CD4-positive, alpha-beta memory T cell (primary cell): ENCODE measurements at regions of chr9 and their contacts with region 1.

Region 1: DNA sequence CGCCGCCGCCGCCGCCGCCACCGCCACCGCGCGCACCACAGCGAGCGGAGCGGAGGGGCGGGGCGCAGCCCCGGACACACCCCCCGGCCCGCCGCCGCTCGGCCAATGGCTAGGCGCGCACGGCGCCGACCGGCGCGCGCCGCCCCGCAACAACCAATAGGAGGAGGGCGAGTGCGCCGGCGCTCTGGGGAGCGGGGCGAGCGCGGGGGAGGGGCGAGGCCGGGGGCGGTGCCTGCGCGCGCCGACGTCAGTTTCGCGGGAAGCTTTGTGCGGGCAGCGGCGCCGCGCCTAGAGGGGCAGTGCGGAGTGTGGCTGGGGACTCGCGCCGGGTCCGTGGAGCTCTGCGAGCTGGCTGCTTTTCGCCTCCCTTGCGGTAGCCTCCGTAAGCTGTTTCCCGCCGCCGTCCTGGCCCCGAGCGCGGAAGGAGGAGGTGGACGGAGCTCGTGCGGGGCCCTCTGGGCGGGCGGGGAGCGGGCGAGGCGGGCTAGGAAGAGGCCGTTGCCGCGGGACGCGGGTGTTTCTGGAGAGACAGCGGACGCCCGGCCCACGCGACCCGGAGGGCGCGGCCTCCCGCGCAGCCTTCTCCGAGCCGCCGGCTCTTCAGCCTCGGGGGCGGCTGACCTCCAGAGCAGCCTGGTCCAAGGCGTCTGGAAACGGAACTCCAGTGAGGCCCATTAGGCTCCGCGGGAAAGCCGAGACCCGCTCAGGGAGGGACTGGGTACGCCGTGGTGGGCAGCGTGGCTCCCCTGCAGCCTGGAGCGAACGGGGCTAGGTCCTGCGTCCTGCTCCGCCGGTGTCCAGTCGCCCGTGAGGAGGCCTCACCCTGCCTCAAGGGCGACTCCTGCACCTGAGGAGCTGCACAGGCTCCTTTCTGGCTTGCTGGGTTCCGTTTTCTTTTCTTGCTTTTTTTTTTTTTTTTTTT is at the start of gene ZMYND19:
- DNase-seq: peak; percentile 85 to 93 (median 91)
- H3K4me3 ChIP-seq: peak within 1 kb of the TSS; percentile 23 to 52
- H3K4me3 Mint-ChIP-seq: peak within 1 kb of the TSS; percentile 92 to 100 (median 96)
- H3K27ac ChIP-seq: peak within 1 kb of the TSS; percentile 60
- H3K27ac Mint-ChIP-seq: peak within 1 kb of the TSS; percentile 89 to 97 (median 95)
- H3K4me1 ChIP-seq: peaks cover 21% of the 10 kb centered on the region
- H3K4me1 Mint-ChIP-seq: peaks cover 5 to 24% (median 15%) of the 10 kb centered on the region in 4 donors
- H3K27me3 ChIP-seq: no peaks in the 10 kb centered on the region
- H3K27me3 Mint-ChIP-seq: no peaks in the 10 kb centered on the region
- total RNA-seq, gene ZMYND19: 26.8 to 29.1 TPM

Region 2: GRCh38 chr9:137605121-137606004 is 14.6 kb after region 1 on chr9 and contains the start of gene ARRDC1:
- CTCF ChIA-PET with region 1: interaction called, 4 read pairs
- POLR2A ChIA-PET with region 1: interaction called, 8 read pairs
- intact Hi-C with region 1: loop called (anchors 1 kb)
- DNase-seq: peak; percentile 85 to 94 (median 93)
- H3K4me3 ChIP-seq: peak within 1 kb of the TSS in 1 of 2 donors; percentile 63
- H3K4me3 Mint-ChIP-seq: peak within 1 kb of the TSS; percentile 80 to 88 (median 84)
- H3K27ac ChIP-seq: peak within 1 kb of the TSS; percentile 70
- H3K27ac Mint-ChIP-seq: peak within 1 kb of the TSS in 4 of 7 donors; percentile 52 to 75 (median 68)
- H3K4me1 ChIP-seq: peaks cover 15% of the 10 kb centered on the region
- H3K4me1 Mint-ChIP-seq: peaks cover 7 to 37% (median 20%) of the 10 kb centered on the region in 4 donors
- H3K27me3 ChIP-seq: no peaks in the 10 kb centered on the region
- H3K27me3 Mint-ChIP-seq: no peaks in the 10 kb centered on the region
- total RNA-seq, gene ARRDC1: 82.3 to 86.2 TPM

Region 3: GRCh38 chr9:137638680-137639079 is 48.0 kb after region 1 on chr9:
- CTCF ChIA-PET with region 1: no interaction called
- POLR2A ChIA-PET with region 1: no interaction called
- intact Hi-C with region 1: no loop called
- DNase-seq: no peak
- H3K4me3 ChIP-seq: peak overlapping the region in 1 of 2 donors; percentile 2
- H3K4me3 Mint-ChIP-seq: peak overlapping the region; percentile 65 to 87 (median 80)
- H3K27ac ChIP-seq: peak overlapping the region; percentile 42
- H3K27ac Mint-ChIP-seq: peak overlapping the region; percentile 56 to 97 (median 90)
- H3K4me1 ChIP-seq: peaks cover 29% of the 10 kb centered on the region
- H3K4me1 Mint-ChIP-seq: peaks cover 33 to 66% (median 44%) of the 10 kb centered on the region in 4 donors
- H3K27me3 ChIP-seq: no peaks in the 10 kb centered on the region
- H3K27me3 Mint-ChIP-seq: no peaks in the 10 kb centered on the region